BJ (cell line): ENCODE measurements at regions of chr1 and their contacts with region 1.

Region 1: DNA sequence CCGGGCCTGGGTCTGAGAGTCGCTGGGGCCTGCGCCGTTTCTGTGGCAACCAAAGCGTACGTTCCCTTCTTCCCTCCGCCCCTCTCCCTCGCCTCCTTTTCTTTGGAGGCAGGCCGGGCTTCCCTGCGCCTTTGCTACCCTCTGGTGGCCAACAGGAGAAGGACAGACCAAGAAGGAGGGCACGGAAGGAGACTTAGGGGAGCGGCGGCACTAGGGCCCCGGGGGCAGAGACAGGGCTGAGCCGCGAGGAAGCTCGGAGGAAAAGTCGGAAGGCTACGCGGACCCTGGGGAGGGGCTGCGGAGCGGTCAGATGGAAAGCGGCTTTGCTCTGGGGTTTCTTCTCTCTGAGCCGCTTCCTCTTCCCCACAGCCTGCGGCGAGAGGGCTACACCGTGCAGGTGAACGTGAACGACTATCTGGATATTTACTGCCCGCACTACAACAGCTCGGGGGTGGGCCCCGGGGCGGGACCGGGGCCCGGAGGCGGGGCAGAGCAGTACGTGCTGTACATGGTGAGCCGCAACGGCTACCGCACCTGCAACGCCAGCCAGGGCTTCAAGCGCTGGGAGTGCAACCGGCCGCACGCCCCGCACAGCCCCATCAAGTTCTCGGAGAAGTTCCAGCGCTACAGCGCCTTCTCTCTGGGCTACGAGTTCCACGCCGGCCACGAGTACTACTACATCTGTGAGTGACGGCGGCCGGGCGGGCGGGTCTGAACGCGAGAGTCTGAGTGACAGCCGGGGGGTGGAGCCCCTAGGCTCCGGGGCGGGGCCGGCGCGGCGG is 6.3 kb downstream of the EFNA3 start:
- DNase-seq: peak; percentile 62
- H3K4me3 ChIP-seq: peak overlapping the region; percentile 80
- H3K27me3 ChIP-seq: peaks cover 32% of the 10 kb centered on the region
- CTCF ChIP-seq: peak; percentile 96

Region 2: GRCh38 chr1:154479764-154480421 is 605.0 kb before region 1 on chr1:
- CTCF ChIA-PET with region 1: interaction called, 10 read pairs
- POLR2A ChIA-PET with region 1: interaction called, 14 read pairs
- DNase-seq: peak; percentile 24
- H3K4me3 ChIP-seq: no peak overlapping the region
- H3K27me3 ChIP-seq: no peaks in the 10 kb centered on the region
- CTCF ChIP-seq: peak; percentile 88

Region 3: DNA sequence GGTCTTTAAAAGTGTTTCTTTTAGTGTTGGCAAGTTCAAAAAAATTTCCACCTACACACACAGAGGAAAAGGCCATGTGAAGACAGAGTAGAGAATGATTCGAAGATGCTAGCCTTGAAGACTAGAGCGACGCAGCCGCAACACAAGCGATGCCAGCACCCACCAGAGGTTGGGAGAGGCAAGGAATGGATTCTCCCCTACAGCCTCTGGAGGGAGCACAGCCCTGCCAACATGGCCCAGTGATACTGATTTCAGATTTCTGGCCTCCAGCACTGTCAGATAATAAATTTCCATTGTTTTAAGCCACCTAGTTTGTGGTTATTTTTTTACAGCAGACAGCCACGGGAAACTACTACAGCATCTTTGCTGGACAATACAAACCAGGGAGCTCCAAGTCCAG is 470.0 kb before region 1 on chr1:
- CTCF ChIA-PET with region 1: no interaction called
- POLR2A ChIA-PET with region 1: no interaction called
- DNase-seq: no peak
- H3K4me3 ChIP-seq: no peak overlapping the region
- H3K27me3 ChIP-seq: no peaks in the 10 kb centered on the region
- CTCF ChIP-seq: no peak

Region 4: GRCh38 chr1:155050560-155051341 is 34.2 kb before region 1 on chr1 and contains the start of gene ADAM15:
- CTCF ChIA-PET with region 1: interaction called, 86 read pairs
- POLR2A ChIA-PET with region 1: interaction called, 3 read pairs
- DNase-seq: no peak
- H3K4me3 ChIP-seq: peak within 1 kb of the TSS; percentile 68
- H3K27me3 ChIP-seq: no peaks in the 10 kb centered on the region
- CTCF ChIP-seq: peak; percentile 87
- polyA plus RNA-seq, gene ADAM15: 55.1 and 88.8 TPM in 2 replicates

Region 5: DNA sequence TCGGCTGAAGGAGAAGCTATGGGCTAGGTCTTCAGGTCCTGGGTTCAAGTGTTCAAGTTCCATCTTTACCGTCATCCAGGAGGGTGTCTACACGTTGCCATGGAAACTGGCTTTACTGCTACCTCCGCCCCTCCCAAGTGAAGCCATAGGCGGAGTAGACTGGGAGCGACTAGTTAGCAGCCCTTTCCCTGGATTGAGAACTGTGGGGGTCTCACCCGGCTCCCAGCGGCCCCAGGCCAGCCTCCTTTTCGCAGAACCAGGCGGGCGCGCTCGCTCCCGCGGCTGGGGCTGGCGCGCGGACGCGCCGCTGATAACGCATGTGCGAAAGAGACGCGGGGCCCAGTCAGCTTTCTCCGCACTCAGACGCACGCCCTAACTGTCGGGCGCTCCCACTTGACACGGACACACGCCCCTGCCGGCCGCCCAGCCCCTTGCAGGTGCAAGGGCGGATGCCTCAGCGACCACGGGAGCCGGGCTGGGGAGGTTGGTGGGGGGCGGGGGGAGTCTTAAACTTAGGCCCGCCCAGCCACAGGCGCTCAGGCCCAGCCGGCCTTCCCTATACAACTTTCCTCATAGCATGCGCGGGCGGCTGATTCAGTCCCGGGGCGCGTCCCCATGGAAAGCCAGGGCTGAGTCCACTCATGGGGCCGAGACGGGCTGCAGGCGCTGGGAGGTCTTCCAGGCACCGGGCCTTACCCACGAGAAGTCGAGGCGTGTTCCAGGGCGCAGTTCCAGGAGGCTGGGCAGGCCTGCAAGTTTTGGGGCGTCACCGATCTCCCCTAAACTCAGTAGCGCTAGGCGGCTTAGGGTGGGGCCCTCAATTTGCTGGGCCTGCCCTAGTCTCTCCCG is 14.0 kb before region 1 on chr1:
- CTCF ChIA-PET with region 1: interaction called, 147 read pairs
- POLR2A ChIA-PET with region 1: no interaction called
- DNase-seq: no peak
- H3K4me3 ChIP-seq: peak overlapping the region; percentile 36
- H3K27me3 ChIP-seq: no peaks in the 10 kb centered on the region
- CTCF ChIP-seq: peak; percentile 54

Region 6: DNA sequence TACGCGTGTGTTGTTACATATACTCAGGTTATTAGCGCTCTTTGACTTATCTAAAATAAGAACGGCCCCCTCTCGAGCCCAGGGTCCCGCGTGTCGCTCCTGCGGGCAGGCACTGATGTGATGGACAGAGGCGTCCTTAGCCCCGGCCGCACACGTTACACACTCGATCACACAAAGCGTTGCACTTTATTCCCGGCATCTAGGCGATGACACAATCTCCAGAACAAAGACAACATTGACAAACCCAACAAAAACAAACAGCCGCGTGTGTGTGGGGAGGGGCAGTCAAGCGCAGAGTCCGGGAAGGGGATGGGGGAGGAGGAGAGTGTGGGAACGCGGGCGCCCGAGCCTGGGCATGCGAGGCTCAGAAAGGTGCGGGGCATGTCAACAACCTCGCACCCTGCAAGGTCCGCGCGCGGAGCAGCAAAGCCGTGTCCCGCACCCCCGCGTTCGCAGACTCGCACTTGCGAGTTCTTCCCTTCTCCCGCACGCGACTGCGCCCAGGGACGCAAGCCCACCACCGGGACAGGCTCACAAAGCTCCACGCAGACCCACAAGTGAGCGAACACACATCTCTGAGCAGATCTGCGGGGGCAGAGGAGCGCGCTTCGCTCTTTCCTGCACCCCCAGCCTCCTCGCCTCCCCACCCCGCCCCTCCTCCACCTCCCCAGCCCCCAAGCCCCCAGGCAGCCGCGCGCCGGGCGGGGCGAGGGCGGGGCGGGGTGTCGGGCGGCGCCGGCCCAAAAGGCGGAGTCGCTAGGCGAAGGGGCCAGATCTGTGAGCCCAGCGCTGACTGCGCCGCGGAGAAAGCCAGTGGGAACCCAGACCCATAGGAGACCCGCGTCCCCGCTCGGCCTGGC is 42.4 kb after region 1 on chr1 and contains the start of gene EFNA1:
- CTCF ChIA-PET with region 1: interaction called, 11 read pairs
- POLR2A ChIA-PET with region 1: no interaction called
- DNase-seq: no peak
- H3K4me3 ChIP-seq: peak within 1 kb of the TSS; percentile 40
- H3K27me3 ChIP-seq: peaks cover 44% of the 10 kb centered on the region
- CTCF ChIP-seq: no peak
- polyA plus RNA-seq, gene EFNA1: 1.1 and 1.6 TPM in 2 replicates

Region 7: GRCh38 chr1:155167166-155168104 is 82.5 kb after region 1 on chr1:
- CTCF ChIA-PET with region 1: interaction called, 259 read pairs
- POLR2A ChIA-PET with region 1: no interaction called
- DNase-seq: no peak
- H3K4me3 ChIP-seq: no peak overlapping the region
- H3K27me3 ChIP-seq: peaks cover 4% of the 10 kb centered on the region; the same call in 1 of the 2 replicates
- CTCF ChIP-seq: peak; percentile 90